Activated CD4-positive, alpha-beta T cell treated with anti-CD3 and anti-CD28 coated beads for 36 hours (primary cell): ENCODE measurements at regions of chr2 and their contacts with region 1.

Region 1: GRCh38 chr2:230411570-230412370 is 4.2 kb upstream of the SP100 start:
- DNase-seq: peak; percentile 76
- ATAC-seq: peak; percentile 66
- H3K4me3 Mint-ChIP-seq: peak overlapping the region; percentile 85
- H3K27ac Mint-ChIP-seq: peak overlapping the region; percentile 96
- H3K4me1 Mint-ChIP-seq: peaks cover 60% of the 10 kb centered on the region
- H3K27me3 Mint-ChIP-seq: no peaks in the 10 kb centered on the region

Region 2: GRCh38 chr2:230219419-230220331 is 192.1 kb before region 1 on chr2 and contains the start of gene SP110:
- CTCF ChIA-PET with region 1: interaction called, 4 read pairs
- POLR2A ChIA-PET with region 1: no interaction called
- intact Hi-C with region 1: loop called (anchors 2 to 5 kb)
- DNase-seq: peak; percentile 89
- ATAC-seq: peak; percentile 91
- H3K4me3 Mint-ChIP-seq: peak within 1 kb of the TSS; percentile 88
- H3K27ac Mint-ChIP-seq: peak within 1 kb of the TSS; percentile 97
- H3K4me1 Mint-ChIP-seq: peaks cover 66% of the 10 kb centered on the region
- H3K27me3 Mint-ChIP-seq: no peaks in the 10 kb centered on the region
- total RNA-seq, gene SP110: 96.2 to 111 TPM

Region 3: GRCh38 chr2:230268606-230269243 is 143.0 kb before region 1 on chr2:
- CTCF ChIA-PET with region 1: no interaction called
- POLR2A ChIA-PET with region 1: no interaction called
- intact Hi-C with region 1: loop called in 1 of 2 experiments (anchors 10 kb)
- DNase-seq: peak; percentile 41
- ATAC-seq: peak; percentile 75
- H3K4me3 Mint-ChIP-seq: peak overlapping the region; percentile 11
- H3K27ac Mint-ChIP-seq: peak overlapping the region; percentile 74
- H3K4me1 Mint-ChIP-seq: peaks cover 43% of the 10 kb centered on the region
- H3K27me3 Mint-ChIP-seq: no peaks in the 10 kb centered on the region

Region 4: DNA sequence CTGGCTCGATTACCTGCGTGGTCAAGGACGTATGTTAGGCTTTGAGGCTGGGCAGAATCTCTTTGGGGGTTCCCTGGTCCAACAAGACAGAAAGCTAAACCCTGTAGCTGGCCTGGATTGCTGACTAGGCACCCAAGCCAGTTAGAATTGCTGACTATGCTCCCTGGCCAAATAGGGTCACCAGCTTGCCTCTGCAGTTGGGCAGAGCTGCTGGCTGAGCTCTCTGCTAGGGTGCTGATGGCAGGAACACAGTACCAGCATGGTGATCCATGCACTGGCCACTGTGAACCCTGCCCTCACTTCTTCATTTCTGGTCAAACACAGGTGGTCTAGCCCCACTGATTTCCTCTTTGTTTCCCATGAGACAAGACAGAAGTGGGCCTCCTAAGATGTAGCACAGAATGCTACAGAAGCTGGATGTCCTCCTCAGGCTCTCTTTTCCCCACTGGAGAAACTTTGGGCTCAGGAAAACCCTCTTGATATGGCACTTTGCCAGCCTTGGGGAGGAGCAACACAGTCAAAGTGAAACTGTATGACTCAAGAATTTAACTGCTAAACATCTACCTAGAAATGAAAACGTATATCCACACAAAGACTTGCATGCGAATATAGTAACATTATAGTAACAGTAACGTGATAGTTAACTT is 64.0 kb before region 1 on chr2:
- CTCF ChIA-PET with region 1: no interaction called
- POLR2A ChIA-PET with region 1: no interaction called
- intact Hi-C with region 1: loop called in 1 of 2 experiments (anchors 5 kb)
- DNase-seq: peak; percentile 65
- ATAC-seq: peak; percentile 60
- H3K4me3 Mint-ChIP-seq: peak overlapping the region; percentile 47
- H3K27ac Mint-ChIP-seq: peak overlapping the region; percentile 90
- H3K4me1 Mint-ChIP-seq: peaks cover 69% of the 10 kb centered on the region
- H3K27me3 Mint-ChIP-seq: no peaks in the 10 kb centered on the region

Region 5: GRCh38 chr2:230472621-230473018 is 60.9 kb after region 1 on chr2:
- CTCF ChIA-PET with region 1: no interaction called
- POLR2A ChIA-PET with region 1: no interaction called
- intact Hi-C with region 1: loop called in 1 of 2 experiments (anchors 2 kb)
- DNase-seq: peak; percentile 77
- ATAC-seq: peak; percentile 95
- H3K4me3 Mint-ChIP-seq: peak overlapping the region; percentile 17
- H3K27ac Mint-ChIP-seq: peak overlapping the region; percentile 81
- H3K4me1 Mint-ChIP-seq: peaks cover 35% of the 10 kb centered on the region
- H3K27me3 Mint-ChIP-seq: no peaks in the 10 kb centered on the region